ENCODE measurements at regions of chr10 and their contacts with region 1.

Region 1: DNA sequence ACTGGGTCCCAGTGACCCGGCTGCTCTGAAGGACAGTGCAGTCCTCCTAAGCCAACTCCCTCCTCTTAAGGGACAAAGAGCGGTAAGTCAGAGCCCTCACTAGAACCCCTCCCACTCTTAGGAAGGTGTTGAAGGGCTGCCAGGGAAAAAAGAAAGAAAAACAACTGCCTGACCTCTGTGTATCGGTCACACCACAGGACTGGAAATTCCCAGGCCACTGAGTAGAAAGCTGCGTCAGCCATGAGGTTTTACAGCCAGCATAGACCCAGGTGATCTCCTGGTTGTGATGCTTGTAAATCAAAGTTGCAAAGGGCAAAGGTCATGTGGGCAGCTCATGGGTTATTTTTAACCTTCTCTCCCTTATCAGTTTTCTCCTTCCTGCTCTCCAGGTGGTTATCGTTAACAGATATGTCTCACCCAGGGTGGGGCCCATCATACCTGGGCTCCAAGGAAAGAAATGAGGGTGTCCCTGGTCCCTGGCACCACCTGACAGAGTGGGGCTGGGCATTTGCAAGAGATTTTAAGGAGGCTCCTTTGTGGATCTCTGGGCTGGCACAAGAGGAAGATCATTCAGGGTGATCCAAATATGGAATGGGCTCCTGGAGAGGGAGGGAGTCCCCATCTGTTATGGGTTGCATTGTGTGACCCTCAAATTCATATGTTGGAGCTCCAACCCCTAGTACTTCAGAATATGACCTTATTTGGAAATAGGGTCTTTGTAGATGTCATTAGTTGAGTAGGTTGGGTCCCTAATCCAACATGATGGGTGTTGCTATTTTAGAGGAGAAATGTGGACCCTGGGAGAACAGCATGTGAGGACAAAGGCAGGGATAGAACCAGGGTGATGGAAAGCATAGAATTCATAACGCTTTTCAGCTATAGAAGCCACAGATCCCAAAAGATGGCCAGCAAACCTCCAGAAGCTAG is 91.3 kb upstream of the SMNDC1 start:
- DNase-seq: peak; percentile 96
- ATAC-seq: peak; percentile 58
- H3K4me3 ChIP-seq: peak overlapping the region in 1 of 2 experiments; percentile 19; a peak in 2 of 4 replicates
- H3K27ac ChIP-seq: peak overlapping the region; percentile 71
- H3K4me1 ChIP-seq: peaks cover 69 to 85% of the 10 kb centered on the region in 2 experiments
- H3K27me3 ChIP-seq: no peaks in the 10 kb centered on the region
- CTCF ChIP-seq: no peak
- POLR2A ChIP-seq: no peak
- RAD21 ChIP-seq: no peak

Region 2: DNA sequence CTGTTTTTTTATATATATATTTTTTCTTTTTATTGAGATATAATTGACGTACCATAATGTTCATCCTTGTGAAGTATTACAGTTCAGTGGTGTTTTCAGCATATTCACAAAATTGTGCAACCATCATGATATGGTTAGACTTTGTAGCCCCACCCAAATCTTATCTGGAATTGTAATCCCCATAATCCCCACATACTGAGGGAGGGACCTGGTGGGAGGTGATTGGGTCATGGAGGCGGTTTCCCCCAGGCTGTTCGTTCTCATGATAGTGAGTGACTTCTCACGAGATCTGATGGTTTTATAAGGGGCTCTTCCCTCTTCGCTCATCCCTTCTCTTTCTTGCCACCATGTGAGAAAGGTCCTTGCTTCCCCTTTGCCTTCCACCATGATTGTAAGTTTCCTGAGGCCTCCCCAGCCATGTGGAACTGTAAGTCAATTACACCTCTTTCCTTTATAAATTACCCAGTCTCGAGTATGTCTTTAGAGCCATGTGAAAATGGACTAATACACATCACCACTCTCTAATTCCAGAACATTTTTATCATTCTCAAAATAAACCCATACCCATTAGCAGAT is 17.4 kb before region 1 on chr10:
- CTCF ChIA-PET with region 1: no interaction called
- POLR2A ChIA-PET with region 1: interaction called, 4 read pairs
- RAD21 ChIA-PET with region 1: no interaction called
- intact Hi-C with region 1: loop called (anchors 1 kb)
- DNase-seq: no peak
- ATAC-seq: no peak
- H3K4me3 ChIP-seq: no peak overlapping the region
- H3K27ac ChIP-seq: no peak overlapping the region
- H3K4me1 ChIP-seq: peaks cover 0 to 21% of the 10 kb centered on the region in 2 experiments; a peak in 3 of 4 replicates
- H3K27me3 ChIP-seq: no peaks in the 10 kb centered on the region; the same call in 1 of the 2 replicates
- CTCF ChIP-seq: no peak
- POLR2A ChIP-seq: no peak
- RAD21 ChIP-seq: no peak

Region 3: GRCh38 chr10:110471566-110472139 is 75.7 kb after region 1 on chr10:
- CTCF ChIA-PET with region 1: no interaction called
- POLR2A ChIA-PET with region 1: no interaction called
- RAD21 ChIA-PET with region 1: no interaction called
- intact Hi-C with region 1: no loop called
- DNase-seq: no peak
- ATAC-seq: peak; percentile 65
- H3K4me3 ChIP-seq: no peak overlapping the region
- H3K27ac ChIP-seq: no peak overlapping the region
- H3K4me1 ChIP-seq: peaks cover 8 to 15% of the 10 kb centered on the region in 2 experiments; a peak in 3 of 4 replicates
- H3K27me3 ChIP-seq: no peaks in the 10 kb centered on the region
- CTCF ChIP-seq: no peak
- POLR2A ChIP-seq: no peak
- RAD21 ChIP-seq: no peak

Measured in HCT116 (cell line).